ENCODE measurements at regions of chr6 and their contacts with region 1.

Region 1: GRCh38 chr6:33430991-33431879 is 11.4 kb downstream of the SYNGAP1 start:
- DNase-seq: peak; percentile 26
- H3K4me3 ChIP-seq: no peak overlapping the region
- H3K27ac ChIP-seq: no peak overlapping the region
- H3K4me1 ChIP-seq: no peaks in the 10 kb centered on the region
- H3K27me3 ChIP-seq: no peaks in the 10 kb centered on the region
- CTCF ChIP-seq: no peak
- POLR2A ChIP-seq: no peak

Region 2: DNA sequence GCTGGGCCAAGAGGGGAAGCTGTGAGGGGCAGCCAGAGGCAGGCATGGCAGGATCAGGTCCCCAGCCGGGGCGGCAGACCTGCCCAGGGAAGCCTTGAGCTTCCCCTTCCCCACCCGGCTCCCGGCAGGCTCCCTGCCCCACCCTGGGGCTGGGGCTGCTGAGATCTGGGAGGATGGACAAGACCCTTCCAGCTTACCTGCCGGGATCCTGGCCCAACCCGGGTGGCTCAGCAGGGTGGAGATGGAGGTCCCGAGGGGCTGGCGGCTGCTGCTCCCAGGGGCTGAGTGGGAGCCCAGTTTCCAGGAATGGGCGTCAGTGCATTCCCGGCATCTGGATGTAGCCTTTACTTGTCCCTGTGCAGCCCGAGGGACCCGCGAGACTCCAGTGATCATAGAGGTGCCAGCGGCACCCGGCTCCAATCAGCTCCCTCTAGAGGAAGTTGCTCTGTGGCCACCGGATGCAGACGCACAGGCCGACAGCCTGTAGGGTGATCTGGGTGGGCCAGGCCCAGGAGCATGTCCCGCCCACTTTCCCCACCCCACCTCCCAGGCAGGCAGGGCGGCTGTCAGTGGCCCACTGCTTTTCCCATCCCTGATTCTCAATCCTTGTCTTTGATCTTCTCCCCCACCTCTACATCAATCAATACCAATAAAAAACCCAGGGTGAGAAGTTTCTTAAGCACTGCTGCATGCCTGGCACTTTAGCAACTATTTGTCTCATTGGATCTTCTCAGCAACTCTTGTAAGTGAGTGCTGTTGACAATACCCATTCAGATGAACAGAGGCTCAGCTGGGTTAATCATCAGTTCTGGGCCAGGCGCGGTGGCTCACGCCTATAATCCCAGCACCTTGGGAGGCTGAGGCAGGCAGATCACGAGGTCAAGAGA is 148.8 kb after region 1 on chr6 and contains the start of gene BAK1:
- intact Hi-C with region 1: loop called (anchors 10 kb)
- DNase-seq: peak; percentile 88
- H3K4me3 ChIP-seq: peak within 1 kb of the TSS; percentile 54 to 70
- H3K27ac ChIP-seq: peak within 1 kb of the TSS; percentile 68 to 70
- H3K4me1 ChIP-seq: no peaks in the 10 kb centered on the region
- H3K27me3 ChIP-seq: no peaks in the 10 kb centered on the region
- CTCF ChIP-seq: peak in 3 of 4 experiments; percentile 42 to 75 (median 70)
- POLR2A ChIP-seq: peak; percentile 85
- total RNA-seq, gene BAK1: 6.2 to 13.6 TPM

Region 3: GRCh38 chr6:33896391-33897183 is 465.4 kb after region 1 on chr6:
- intact Hi-C with region 1: no loop called
- DNase-seq: no peak
- H3K4me3 ChIP-seq: no peak overlapping the region
- H3K27ac ChIP-seq: no peak overlapping the region
- H3K4me1 ChIP-seq: no peaks in the 10 kb centered on the region
- H3K27me3 ChIP-seq: no peaks in the 10 kb centered on the region
- CTCF ChIP-seq: no peak
- POLR2A ChIP-seq: no peak